Dendritic cell treated with granulocyte-macrophage colony-stimulating factor and Interleukin-4, amounts not matched to agents 40 ng/mL and 50 ng/mL, for 4 days (primary cell): ENCODE measurements at regions of chr1 and their contacts with region 1.

Region 1: DNA sequence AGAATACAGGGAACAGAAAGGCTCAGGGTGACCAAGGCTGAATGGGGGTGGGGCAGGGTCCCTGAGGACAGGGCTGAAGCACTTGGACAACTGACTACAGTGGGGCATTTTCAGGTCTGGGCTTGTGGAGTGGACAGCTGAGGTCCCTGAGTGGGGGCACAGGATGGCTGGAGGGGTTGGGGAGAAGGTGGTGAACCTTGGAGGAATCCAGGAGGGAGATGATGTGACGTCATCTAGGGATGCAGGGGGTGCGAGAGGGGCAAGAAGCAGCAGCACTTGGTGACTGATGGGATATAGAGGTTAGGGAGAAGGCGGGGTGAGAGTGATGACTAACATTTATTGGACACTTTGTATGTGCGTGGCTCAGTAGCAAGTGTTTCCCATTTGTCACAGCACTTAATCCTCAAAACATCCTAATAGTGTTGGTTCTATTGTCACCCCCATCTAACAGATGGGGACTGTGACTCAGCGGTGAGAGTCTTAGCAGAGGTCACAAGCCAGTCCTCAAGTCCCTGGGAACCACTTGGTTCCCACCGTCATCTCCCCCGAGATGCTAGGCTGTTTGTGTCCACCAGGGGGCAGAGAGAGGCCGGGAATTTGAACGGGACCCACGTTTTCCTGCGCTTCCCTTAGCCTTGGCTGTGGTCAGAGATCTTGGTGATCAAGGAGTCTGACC is 27.9 kb upstream of the BMP8B start:
- H3K4me3 Mint-ChIP-seq: peak overlapping the region; percentile 57
- H3K27ac Mint-ChIP-seq: peak overlapping the region; percentile 75
- H3K4me1 Mint-ChIP-seq: peaks cover 29% of the 10 kb centered on the region
- H3K27me3 Mint-ChIP-seq: no peaks in the 10 kb centered on the region

Region 2: GRCh38 chr1:39639305-39640130 is 177.0 kb before region 1 on chr1 and contains the start of gene HEYL:
- intact Hi-C with region 1: no loop called
- H3K4me3 Mint-ChIP-seq: peak within 1 kb of the TSS; percentile 74
- H3K27ac Mint-ChIP-seq: peak within 1 kb of the TSS; percentile 28
- H3K4me1 Mint-ChIP-seq: peaks cover 11% of the 10 kb centered on the region
- H3K27me3 Mint-ChIP-seq: peaks cover 39% of the 10 kb centered on the region

Region 3: GRCh38 chr1:39829791-39830533 is 13.4 kb after region 1 on chr1:
- intact Hi-C with region 1: no loop called
- H3K4me3 Mint-ChIP-seq: no peak overlapping the region
- H3K27ac Mint-ChIP-seq: peak overlapping the region; percentile 54
- H3K4me1 Mint-ChIP-seq: peaks cover 69% of the 10 kb centered on the region
- H3K27me3 Mint-ChIP-seq: peaks cover 5% of the 10 kb centered on the region

Region 4: GRCh38 chr1:39901698-39902459 is 85.3 kb after region 1 on chr1 and contains the start of gene MYCL:
- intact Hi-C with region 1: loop called (anchors 2 kb)
- H3K4me3 Mint-ChIP-seq: peak within 1 kb of the TSS; percentile 87
- H3K27ac Mint-ChIP-seq: peak within 1 kb of the TSS; percentile 78
- H3K4me1 Mint-ChIP-seq: peaks cover 68% of the 10 kb centered on the region
- H3K27me3 Mint-ChIP-seq: peaks cover 7% of the 10 kb centered on the region

Region 5: GRCh38 chr1:39919545-39919944 is 103.0 kb after region 1 on chr1:
- intact Hi-C with region 1: loop called (anchors 5 kb)
- H3K4me3 Mint-ChIP-seq: no peak overlapping the region
- H3K27ac Mint-ChIP-seq: no peak overlapping the region
- H3K4me1 Mint-ChIP-seq: peaks cover 7% of the 10 kb centered on the region
- H3K27me3 Mint-ChIP-seq: no peaks in the 10 kb centered on the region